ENCODE measurements at regions of chr1 and their contacts with region 1.

Region 1: GRCh38 chr1:27643701-27644625 is 9.0 kb upstream of the FGR start:
- DNase-seq: peak in 3 of 5 donors; percentile 64 to 73 (median 71)
- ATAC-seq: peak in 3 of 4 donors; percentile 65 to 77 (median 73)
- H3K4me3 ChIP-seq: no peak overlapping the region
- H3K27ac ChIP-seq: no peak overlapping the region
- H3K4me1 ChIP-seq: peaks cover 0 to 36% (median 13%) of the 10 kb centered on the region in 12 donors
- H3K27me3 ChIP-seq: no peaks in the 10 kb centered on the region
- CTCF ChIP-seq: peak; percentile 71 to 85 (median 77)
- POLR2A ChIP-seq: no peak

Region 2: DNA sequence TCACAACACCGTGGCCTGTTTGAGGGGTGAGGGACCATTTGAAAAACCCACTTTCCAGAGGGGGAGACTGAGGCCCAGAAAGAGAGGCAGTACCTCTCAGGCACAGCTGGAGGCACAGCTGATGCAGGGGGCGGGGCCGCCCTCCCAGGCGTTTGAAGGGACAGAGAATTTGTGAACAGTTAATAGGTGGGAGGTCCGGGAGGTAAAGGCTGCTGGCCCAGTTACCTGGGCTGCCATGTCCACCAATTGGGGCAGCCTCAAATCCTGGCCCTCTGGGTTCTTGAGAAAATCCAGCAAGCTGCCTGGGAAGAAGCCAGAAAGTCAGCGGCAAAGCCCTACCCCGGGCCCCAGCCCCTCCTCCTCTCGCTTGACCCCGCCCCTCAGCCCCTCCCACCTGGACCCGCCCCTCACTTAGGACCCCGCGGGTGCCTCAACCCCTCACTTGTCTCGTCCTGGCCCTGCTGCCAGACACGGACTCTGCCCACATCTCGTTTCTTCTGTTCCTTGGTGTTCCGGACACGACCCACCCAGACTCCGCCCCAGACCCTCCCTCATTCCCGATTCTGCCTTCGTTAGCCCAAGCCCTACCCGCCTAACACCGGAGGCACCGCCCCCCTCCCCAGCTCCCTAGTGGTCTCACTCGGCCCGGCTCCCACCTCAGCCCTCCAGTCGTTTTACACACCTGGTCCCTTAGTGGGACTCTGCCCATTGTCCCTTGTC is 29.2 kb before region 1 on chr1:
- intact Hi-C with region 1: loop called in 2 of 10 experiments (anchors 5 kb)
- DNase-seq: peak in 1 of 5 donors; percentile 65
- ATAC-seq: peak in 1 of 4 donors; percentile 13
- H3K4me3 ChIP-seq: no peak overlapping the region
- H3K27ac ChIP-seq: no peak overlapping the region
- H3K4me1 ChIP-seq: peaks cover 0 to 42% (median 2%) of the 10 kb centered on the region in 12 donors
- H3K27me3 ChIP-seq: no peaks in the 10 kb centered on the region
- CTCF ChIP-seq: no peak
- POLR2A ChIP-seq: no peak